ENCODE measurements at regions of chr2 and their contacts with region 1.

Region 1: DNA sequence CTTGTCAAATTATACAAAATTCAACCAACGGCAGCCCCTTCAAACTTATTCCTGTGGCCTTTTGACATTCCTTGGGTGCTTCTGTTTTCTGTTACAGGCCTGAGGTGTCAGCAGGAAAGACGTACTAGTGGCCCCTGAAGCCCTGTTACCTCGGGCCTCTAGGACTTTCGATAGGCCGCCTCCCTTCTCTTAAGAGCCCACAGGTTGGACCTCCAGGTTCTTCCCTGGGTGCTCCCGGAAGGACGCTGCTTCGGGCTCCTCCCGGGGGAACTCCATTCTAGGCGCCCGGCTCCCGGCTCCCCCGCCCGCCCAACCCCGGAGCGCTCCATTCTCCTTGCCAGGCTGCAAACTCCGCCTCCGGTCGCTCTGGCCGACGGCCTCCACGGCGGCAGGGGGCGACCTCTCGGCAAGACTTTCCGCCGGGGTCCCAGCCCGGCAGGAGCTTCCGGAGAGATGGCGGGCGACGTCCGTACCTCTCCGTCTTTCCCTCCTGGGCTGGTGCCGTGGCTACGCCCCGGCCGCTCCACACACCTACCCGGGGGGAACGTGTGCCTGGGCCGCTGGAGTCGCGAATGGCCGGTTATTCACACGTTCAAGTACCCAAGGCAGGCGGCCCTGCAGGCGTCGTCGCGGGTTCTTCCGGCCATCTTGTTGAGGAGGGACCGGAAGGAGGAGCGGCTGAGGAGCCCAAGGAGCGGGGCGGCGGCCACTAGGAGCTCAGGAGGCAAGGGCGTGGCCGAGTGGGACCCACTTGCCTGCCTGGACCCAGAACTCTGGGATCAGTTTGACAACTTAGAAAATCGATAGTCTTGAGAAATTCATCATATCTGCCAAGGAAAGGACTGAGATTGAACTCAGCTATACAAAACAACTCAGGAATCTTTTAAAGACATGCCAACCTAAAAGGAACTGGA is 27.5 kb downstream of the BOLA3 start:
- DNase-seq: peak; percentile 88
- ATAC-seq: peak; percentile 98
- H3K4me3 Mint-ChIP-seq: peak overlapping the region; percentile 83
- H3K27ac Mint-ChIP-seq: peak overlapping the region; percentile 94
- H3K4me1 Mint-ChIP-seq: peaks cover 10% of the 10 kb centered on the region
- H3K27me3 Mint-ChIP-seq: peaks cover 3% of the 10 kb centered on the region
- CTCF ChIP-seq: peak; percentile 73

Region 2: GRCh38 chr2:73821227-73821626 is 298.9 kb before region 1 on chr2:
- CTCF ChIA-PET with region 1: interaction called, 11 read pairs
- POLR2A ChIA-PET with region 1: no interaction called
- intact Hi-C with region 1: no loop called
- DNase-seq: peak; percentile 64
- ATAC-seq: peak; percentile 95
- H3K4me3 Mint-ChIP-seq: no peak overlapping the region
- H3K27ac Mint-ChIP-seq: peak overlapping the region; percentile 67
- H3K4me1 Mint-ChIP-seq: peaks cover 23% of the 10 kb centered on the region
- H3K27me3 Mint-ChIP-seq: peaks cover 4% of the 10 kb centered on the region
- CTCF ChIP-seq: no peak

Measured in activated CD8-positive, alpha-beta T cell treated with anti-CD3 and anti-CD28 coated beads for 36 hours (primary cell).